Activated CD4-positive, alpha-beta T cell treated with anti-CD3 and anti-CD28 coated beads, Interleukin-2, amount 10 ng/mL, durations not matched to agents 24 days and 14 days (primary cell): ENCODE measurements at regions of chr7 and their contacts with region 1.

Region 1: DNA sequence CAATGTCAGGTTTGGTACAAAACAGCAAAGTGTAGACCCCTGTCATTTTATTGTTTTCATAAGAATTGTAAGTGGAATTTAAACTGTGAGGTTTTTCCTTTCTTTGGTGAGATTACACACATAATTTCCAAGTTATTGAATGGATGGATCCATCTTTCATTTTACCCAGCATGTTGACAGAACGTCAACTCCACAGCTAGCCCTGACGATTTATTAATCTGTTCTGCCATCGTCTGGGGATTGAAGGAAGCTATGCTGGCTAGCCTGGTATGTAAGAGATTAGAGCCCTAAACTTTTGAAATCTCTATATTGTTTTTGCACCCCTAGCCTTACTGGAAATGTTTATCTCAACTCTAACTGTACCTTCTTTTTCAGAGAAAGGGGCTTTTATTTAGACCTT is 8.6 kb downstream of the WNT16 start:
- DNase-seq: no peak
- H3K4me3 Mint-ChIP-seq: no peak overlapping the region
- H3K27ac Mint-ChIP-seq: no peak overlapping the region
- H3K4me1 Mint-ChIP-seq: no peaks in the 10 kb centered on the region
- H3K27me3 Mint-ChIP-seq: peaks cover 21% of the 10 kb centered on the region

Region 2: GRCh38 chr7:121126801-121127534 is 210.4 kb before region 1 on chr7:
- intact Hi-C with region 1: loop called (anchors 5 kb)
- DNase-seq: no peak
- H3K4me3 Mint-ChIP-seq: no peak overlapping the region
- H3K27ac Mint-ChIP-seq: no peak overlapping the region
- H3K4me1 Mint-ChIP-seq: no peaks in the 10 kb centered on the region
- H3K27me3 Mint-ChIP-seq: peaks cover 7% of the 10 kb centered on the region

Region 3: GRCh38 chr7:121262221-121262620 is 75.2 kb before region 1 on chr7:
- intact Hi-C with region 1: no loop called
- DNase-seq: no peak
- H3K4me3 Mint-ChIP-seq: no peak overlapping the region
- H3K27ac Mint-ChIP-seq: no peak overlapping the region
- H3K4me1 Mint-ChIP-seq: no peaks in the 10 kb centered on the region
- H3K27me3 Mint-ChIP-seq: peaks cover 2% of the 10 kb centered on the region